ENCODE measurements at regions of chr6 and their contacts with region 1.

Region 1: GRCh38 chr6:135128268-135128914 is 52.7 kb upstream of the MYB start:
- DNase-seq: peak; percentile 53
- H3K4me3 Mint-ChIP-seq: peak overlapping the region; percentile 66
- H3K27ac Mint-ChIP-seq: peak overlapping the region; percentile 97
- H3K4me1 Mint-ChIP-seq: peaks cover 63% of the 10 kb centered on the region
- H3K27me3 Mint-ChIP-seq: no peaks in the 10 kb centered on the region

Region 2: GRCh38 chr6:135108692-135109091 is 19.7 kb before region 1 on chr6:
- intact Hi-C with region 1: no loop called
- DNase-seq: no peak
- H3K4me3 Mint-ChIP-seq: no peak overlapping the region
- H3K27ac Mint-ChIP-seq: no peak overlapping the region
- H3K4me1 Mint-ChIP-seq: peaks cover 55% of the 10 kb centered on the region
- H3K27me3 Mint-ChIP-seq: no peaks in the 10 kb centered on the region

Region 3: GRCh38 chr6:135170849-135171248 is 42.5 kb after region 1 on chr6:
- intact Hi-C with region 1: loop called (anchors 1 kb)
- DNase-seq: peak; percentile 16
- H3K4me3 Mint-ChIP-seq: peak overlapping the region; percentile 38
- H3K27ac Mint-ChIP-seq: peak overlapping the region; percentile 75
- H3K4me1 Mint-ChIP-seq: peaks cover 50% of the 10 kb centered on the region
- H3K27me3 Mint-ChIP-seq: no peaks in the 10 kb centered on the region

Region 4: DNA sequence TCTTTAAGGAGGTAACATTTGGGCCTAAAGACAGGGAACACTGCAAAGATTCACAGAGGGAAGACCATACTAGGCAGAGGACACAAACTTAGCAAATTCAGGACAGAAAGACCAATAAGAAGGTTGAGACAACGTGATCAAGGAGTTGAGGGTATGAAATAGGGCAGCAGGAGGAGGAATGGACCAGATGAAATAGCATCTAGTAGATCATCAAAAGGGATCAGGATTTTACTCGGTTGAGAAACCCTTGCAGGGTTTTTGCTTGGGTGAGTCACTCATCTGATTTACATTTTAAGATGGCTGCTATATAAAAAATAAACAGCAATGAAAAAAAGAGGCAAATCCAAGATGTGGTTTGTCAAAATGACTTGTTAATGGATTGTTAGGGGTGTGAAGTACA is 1156.5 kb after region 1 on chr6:
- intact Hi-C with region 1: no loop called
- DNase-seq: no peak
- H3K4me3 Mint-ChIP-seq: peak overlapping the region; percentile 58
- H3K27ac Mint-ChIP-seq: peak overlapping the region; percentile 41
- H3K4me1 Mint-ChIP-seq: peaks cover 75% of the 10 kb centered on the region
- H3K27me3 Mint-ChIP-seq: peaks cover 2% of the 10 kb centered on the region

Measured in activated T-helper 1 cell treated with anti-CD3 and anti-CD28 coated beads, Interleukin-12 subunit alpha, Interleukin-12 subunit beta, Interleukin-2, Interleukin-4 antibody, amounts not matched to agents 30 ng/mL and 10 ng/mL and 1 ng/mL, durations not matched to agents 14 hours and 24 hours and 36 hours (primary cell).